ENCODE measurements at regions of chr1 and their contacts with region 1.

Region 1: DNA sequence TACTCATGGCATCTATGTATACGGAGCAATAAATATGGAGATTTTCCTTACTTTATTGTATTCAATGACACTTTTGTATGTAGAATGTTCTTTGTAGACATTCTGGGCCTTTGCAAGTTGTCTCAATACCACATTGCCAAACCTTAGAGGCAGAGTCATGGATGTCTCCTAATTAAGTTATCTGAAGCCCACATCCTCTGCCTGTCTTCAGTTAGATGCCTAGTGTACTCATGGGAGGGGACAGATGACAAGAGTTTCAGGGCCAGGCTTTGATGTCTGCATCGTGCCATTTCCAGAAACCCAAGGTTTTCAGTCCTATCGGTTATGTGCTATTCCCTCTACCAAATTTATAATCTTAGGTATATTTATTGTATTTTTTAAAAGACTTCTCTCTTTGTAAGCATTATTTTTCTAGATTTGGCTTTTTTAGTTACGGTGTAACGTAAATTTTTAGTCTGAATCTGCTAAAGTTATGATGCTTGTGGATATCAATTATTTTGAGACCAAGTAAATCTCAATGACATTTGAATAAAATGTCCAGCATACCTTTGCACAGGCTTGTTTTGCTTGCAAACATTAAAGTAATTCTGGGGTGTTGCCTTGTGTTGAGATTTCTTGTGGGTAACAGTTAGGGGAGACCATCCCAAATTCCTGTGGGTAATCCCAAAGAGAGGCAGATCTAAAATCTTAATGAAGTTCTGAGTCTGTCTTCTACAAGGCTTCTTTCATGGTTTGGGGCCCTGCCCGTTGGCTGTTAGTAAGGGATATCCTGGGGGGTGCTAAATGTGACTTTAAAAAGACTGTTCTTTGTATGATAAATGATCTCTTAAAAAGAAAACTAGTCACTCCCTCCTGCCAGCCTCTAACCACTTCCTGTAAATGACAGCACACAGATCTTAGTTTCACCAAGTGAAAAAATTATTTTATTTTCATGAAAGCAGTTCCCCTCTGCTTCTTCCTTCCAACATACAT is 8.0 kb upstream of the MACF1 start:
- DNase-seq: peak in 7 of 9 donors; percentile 73 to 90 (median 89)
- ATAC-seq: peak; percentile 89
- H3K4me3 ChIP-seq: peak overlapping the region; percentile 62
- H3K4me3 Mint-ChIP-seq: peak overlapping the region; percentile 48 to 88 (median 76)
- H3K27ac ChIP-seq: peak overlapping the region; percentile 78
- H3K27ac Mint-ChIP-seq: peak overlapping the region; percentile 86 to 97 (median 95)
- H3K4me1 ChIP-seq: peaks cover 53 to 58% of the 10 kb centered on the region in 2 donors
- H3K4me1 Mint-ChIP-seq: peaks cover 67 to 91% (median 80%) of the 10 kb centered on the region in 7 donors
- H3K27me3 ChIP-seq: no peaks in the 10 kb centered on the region
- H3K27me3 Mint-ChIP-seq: no peaks in the 10 kb centered on the region

Region 2: GRCh38 chr1:38173157-38173831 is 1023.2 kb before region 1 on chr1:
- CTCF ChIA-PET with region 1: no interaction called
- POLR2A ChIA-PET with region 1: no interaction called
- intact Hi-C with region 1: no loop called
- DNase-seq: no peak
- ATAC-seq: no peak
- H3K4me3 ChIP-seq: no peak overlapping the region
- H3K4me3 Mint-ChIP-seq: no peak overlapping the region
- H3K27ac ChIP-seq: no peak overlapping the region
- H3K27ac Mint-ChIP-seq: no peak overlapping the region
- H3K4me1 ChIP-seq: no peaks in the 10 kb centered on the region
- H3K4me1 Mint-ChIP-seq: no peaks in the 10 kb centered on the region
- H3K27me3 ChIP-seq: no peaks in the 10 kb centered on the region
- H3K27me3 Mint-ChIP-seq: peaks cover 0 to 10% (median 0%) of the 10 kb centered on the region in 5 donors

Region 3: GRCh38 chr1:38990738-38991639 is 205.5 kb before region 1 on chr1 and contains the start of gene AKIRIN1:
- CTCF ChIA-PET with region 1: no interaction called
- POLR2A ChIA-PET with region 1: no interaction called
- intact Hi-C with region 1: loop called (anchors 5 to 10 kb)
- DNase-seq: peak; percentile 82 to 100 (median 89)
- ATAC-seq: peak; percentile 98
- H3K4me3 ChIP-seq: peak within 1 kb of the TSS; percentile 82
- H3K4me3 Mint-ChIP-seq: peak within 1 kb of the TSS; percentile 80 to 95 (median 90)
- H3K27ac ChIP-seq: peak within 1 kb of the TSS; percentile 99
- H3K27ac Mint-ChIP-seq: peak within 1 kb of the TSS; percentile 84 to 95 (median 91)
- H3K4me1 ChIP-seq: peaks cover 14 to 32% of the 10 kb centered on the region in 2 donors
- H3K4me1 Mint-ChIP-seq: peaks cover 24 to 52% (median 42%) of the 10 kb centered on the region in 7 donors
- H3K27me3 ChIP-seq: no peaks in the 10 kb centered on the region
- H3K27me3 Mint-ChIP-seq: peaks cover 0 to 4% (median 0%) of the 10 kb centered on the region in 5 donors
- total RNA-seq, gene AKIRIN1: 63.7 to 74.7 (median 70.2) TPM

Region 4: DNA sequence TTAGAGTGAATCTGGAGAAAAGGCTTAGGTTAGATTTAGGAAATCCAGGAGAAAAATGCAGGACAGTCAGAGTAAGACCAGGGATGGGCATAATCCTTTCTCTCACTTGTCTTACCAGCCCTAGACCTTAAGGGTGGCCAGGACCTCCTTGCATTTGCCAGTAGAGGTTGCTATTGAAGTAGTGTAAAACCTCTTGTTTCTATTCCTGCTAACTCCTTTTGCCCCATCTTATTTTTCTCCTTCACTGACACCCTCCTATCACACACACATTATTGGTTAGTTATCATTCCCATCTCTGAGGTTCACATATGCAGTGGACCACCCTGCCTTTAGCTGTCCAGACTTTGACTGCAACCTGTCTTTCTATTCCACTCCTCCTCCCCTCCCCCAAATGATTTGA is 67.0 kb before region 1 on chr1:
- CTCF ChIA-PET with region 1: interaction called, 3 read pairs
- POLR2A ChIA-PET with region 1: no interaction called
- intact Hi-C with region 1: loop called in 1 of 2 experiments (anchors 1 kb)
- DNase-seq: peak in 1 of 9 donors; percentile 7
- ATAC-seq: no peak
- H3K4me3 ChIP-seq: no peak overlapping the region
- H3K4me3 Mint-ChIP-seq: no peak overlapping the region
- H3K27ac ChIP-seq: no peak overlapping the region
- H3K27ac Mint-ChIP-seq: no peak overlapping the region
- H3K4me1 ChIP-seq: no peaks in the 10 kb centered on the region
- H3K4me1 Mint-ChIP-seq: peaks cover 0 to 17% (median 7%) of the 10 kb centered on the region in 7 donors
- H3K27me3 ChIP-seq: no peaks in the 10 kb centered on the region
- H3K27me3 Mint-ChIP-seq: peaks cover 0 to 3% (median 0%) of the 10 kb centered on the region in 5 donors

Region 5: DNA sequence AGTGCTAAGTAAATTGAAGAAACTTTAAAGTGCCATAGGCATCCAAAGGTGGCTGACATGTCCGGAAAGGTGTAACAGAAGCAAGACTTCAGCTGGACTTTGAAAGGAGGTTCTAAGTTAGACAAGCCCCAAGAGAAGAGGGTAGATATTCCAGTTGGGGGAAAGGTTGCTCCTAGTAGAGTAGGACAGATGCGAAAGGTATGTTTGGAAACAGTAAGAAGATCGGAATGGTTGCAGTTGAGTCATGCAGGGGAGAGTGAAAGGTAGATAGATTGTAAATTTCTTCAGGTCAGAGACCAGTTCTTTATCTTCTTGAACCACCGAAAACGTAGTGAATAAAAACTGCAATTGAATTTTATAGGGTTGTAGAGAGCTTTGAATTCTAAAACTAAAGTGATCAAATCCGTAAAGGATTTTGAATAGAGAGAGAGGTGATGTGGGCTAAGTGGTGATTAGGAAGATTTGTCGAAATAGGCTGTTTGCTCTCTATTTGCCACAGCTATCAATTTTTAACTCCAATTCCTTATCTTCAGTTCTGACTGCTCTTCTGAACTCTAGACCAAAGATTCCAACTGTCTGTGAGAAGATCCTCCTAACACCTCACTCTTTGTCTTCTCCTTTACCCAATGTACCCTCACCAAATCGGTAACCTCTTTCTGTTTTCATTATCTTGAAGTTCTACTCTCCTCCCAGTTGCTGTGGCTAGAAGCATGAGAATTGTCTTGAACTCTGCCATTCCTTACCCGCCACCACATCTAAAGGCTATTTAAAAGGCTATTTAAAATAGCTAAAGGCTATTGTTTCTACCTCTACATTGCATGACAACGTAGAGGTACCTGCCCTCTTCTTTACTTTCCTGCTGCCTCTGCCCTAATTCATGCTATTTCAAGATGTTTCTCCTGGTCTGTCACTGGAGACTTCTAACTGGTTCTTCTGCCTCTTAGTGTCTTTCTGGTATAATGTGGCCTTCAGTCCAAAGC is 24.7 kb after region 1 on chr1:
- CTCF ChIA-PET with region 1: interaction called, 72 read pairs
- POLR2A ChIA-PET with region 1: interaction called, 9 read pairs
- intact Hi-C with region 1: no loop called
- DNase-seq: no peak
- ATAC-seq: no peak
- H3K4me3 ChIP-seq: no peak overlapping the region
- H3K4me3 Mint-ChIP-seq: peak overlapping the region; percentile 17 to 69 (median 46)
- H3K27ac ChIP-seq: no peak overlapping the region
- H3K27ac Mint-ChIP-seq: peak overlapping the region; percentile 1 to 93 (median 51)
- H3K4me1 ChIP-seq: peaks cover 37 to 42% of the 10 kb centered on the region in 2 donors
- H3K4me1 Mint-ChIP-seq: peaks cover 51 to 84% (median 73%) of the 10 kb centered on the region in 7 donors
- H3K27me3 ChIP-seq: no peaks in the 10 kb centered on the region
- H3K27me3 Mint-ChIP-seq: no peaks in the 10 kb centered on the region

Region 6: GRCh38 chr1:39250460-39251240 is 54.1 kb after region 1 on chr1:
- CTCF ChIA-PET with region 1: interaction called, 298 read pairs
- POLR2A ChIA-PET with region 1: interaction called, 10 read pairs
- intact Hi-C with region 1: no loop called
- DNase-seq: no peak
- ATAC-seq: no peak
- H3K4me3 ChIP-seq: no peak overlapping the region
- H3K4me3 Mint-ChIP-seq: no peak overlapping the region
- H3K27ac ChIP-seq: peak overlapping the region; percentile 3
- H3K27ac Mint-ChIP-seq: peak overlapping the region; percentile 7 to 79 (median 45)
- H3K4me1 ChIP-seq: no peaks in the 10 kb centered on the region
- H3K4me1 Mint-ChIP-seq: peaks cover 17 to 65% (median 41%) of the 10 kb centered on the region in 7 donors
- H3K27me3 ChIP-seq: no peaks in the 10 kb centered on the region
- H3K27me3 Mint-ChIP-seq: no peaks in the 10 kb centered on the region

Region 7: GRCh38 chr1:39408641-39409054 is 212.1 kb after region 1 on chr1:
- CTCF ChIA-PET with region 1: interaction called, 6 read pairs
- POLR2A ChIA-PET with region 1: no interaction called
- intact Hi-C with region 1: loop called in 1 of 2 experiments (anchors 2 kb)
- DNase-seq: peak; percentile 59 to 89 (median 72)
- ATAC-seq: peak; percentile 92
- H3K4me3 ChIP-seq: peak overlapping the region; percentile 54
- H3K4me3 Mint-ChIP-seq: peak overlapping the region in 8 of 10 donors; percentile 81 to 94 (median 90)
- H3K27ac ChIP-seq: peak overlapping the region; percentile 73
- H3K27ac Mint-ChIP-seq: peak overlapping the region in 2 of 9 donors; percentile 59 to 88
- H3K4me1 ChIP-seq: peaks cover 16 to 34% of the 10 kb centered on the region in 2 donors
- H3K4me1 Mint-ChIP-seq: peaks cover 36 to 69% (median 63%) of the 10 kb centered on the region in 7 donors
- H3K27me3 ChIP-seq: no peaks in the 10 kb centered on the region
- H3K27me3 Mint-ChIP-seq: no peaks in the 10 kb centered on the region

Region 8: DNA sequence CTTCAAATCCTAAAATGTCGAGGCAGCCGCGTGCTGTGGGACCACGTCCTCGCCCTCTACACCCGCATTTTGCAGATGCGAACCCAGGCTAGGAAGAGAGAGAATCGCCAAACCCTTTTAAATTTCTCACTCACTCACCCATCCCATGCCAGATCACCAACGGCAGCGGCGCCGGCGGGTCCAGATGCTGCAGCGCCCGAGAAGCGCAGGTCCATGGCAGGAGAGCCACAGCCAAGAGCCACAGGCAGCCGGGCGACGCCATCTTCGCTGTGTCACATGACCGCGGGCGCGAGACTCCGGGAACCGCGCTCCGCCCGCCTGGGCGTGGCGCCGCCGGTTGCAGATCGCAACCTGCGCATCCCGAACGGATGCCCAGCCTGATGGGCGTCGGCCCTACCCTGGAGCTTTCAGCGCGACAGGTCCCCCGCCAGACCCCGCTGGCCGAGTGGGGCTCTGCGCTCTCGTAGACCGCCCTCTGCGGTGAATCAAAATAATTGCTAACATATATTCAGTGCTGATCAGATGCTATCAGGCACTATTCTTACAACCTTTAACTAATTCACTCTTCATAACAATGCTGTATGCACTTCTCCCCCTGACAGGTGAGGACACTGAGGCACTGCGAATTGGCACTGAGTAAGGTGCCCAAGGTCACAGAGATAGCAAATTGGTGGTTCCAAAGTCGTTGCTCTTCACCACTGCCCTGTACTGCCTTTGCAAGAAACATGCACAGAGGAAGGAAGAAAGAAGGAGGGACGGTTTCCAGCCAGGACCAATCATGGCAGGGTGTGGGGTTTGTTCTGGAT is 900.6 kb after region 1 on chr1 and contains the start of gene PPT1:
- CTCF ChIA-PET with region 1: no interaction called
- POLR2A ChIA-PET with region 1: no interaction called
- intact Hi-C with region 1: no loop called
- DNase-seq: peak; percentile 52 to 83 (median 77)
- ATAC-seq: peak; percentile 92
- H3K4me3 ChIP-seq: peak within 1 kb of the TSS; percentile 93
- H3K4me3 Mint-ChIP-seq: peak within 1 kb of the TSS; percentile 86 to 97 (median 94)
- H3K27ac ChIP-seq: peak within 1 kb of the TSS; percentile 71
- H3K27ac Mint-ChIP-seq: peak within 1 kb of the TSS; percentile 90 to 97 (median 94)
- H3K4me1 ChIP-seq: peaks cover 13 to 14% of the 10 kb centered on the region in 2 donors
- H3K4me1 Mint-ChIP-seq: peaks cover 26 to 47% (median 34%) of the 10 kb centered on the region in 7 donors
- H3K27me3 ChIP-seq: no peaks in the 10 kb centered on the region
- H3K27me3 Mint-ChIP-seq: peaks cover 0 to 18% (median 3%) of the 10 kb centered on the region in 5 donors
- total RNA-seq, gene PPT1: 51.8 to 114 (median 62.6) TPM